H1 (cell line): ENCODE measurements at regions of chr19 and their contacts with region 1.

Region 1: DNA sequence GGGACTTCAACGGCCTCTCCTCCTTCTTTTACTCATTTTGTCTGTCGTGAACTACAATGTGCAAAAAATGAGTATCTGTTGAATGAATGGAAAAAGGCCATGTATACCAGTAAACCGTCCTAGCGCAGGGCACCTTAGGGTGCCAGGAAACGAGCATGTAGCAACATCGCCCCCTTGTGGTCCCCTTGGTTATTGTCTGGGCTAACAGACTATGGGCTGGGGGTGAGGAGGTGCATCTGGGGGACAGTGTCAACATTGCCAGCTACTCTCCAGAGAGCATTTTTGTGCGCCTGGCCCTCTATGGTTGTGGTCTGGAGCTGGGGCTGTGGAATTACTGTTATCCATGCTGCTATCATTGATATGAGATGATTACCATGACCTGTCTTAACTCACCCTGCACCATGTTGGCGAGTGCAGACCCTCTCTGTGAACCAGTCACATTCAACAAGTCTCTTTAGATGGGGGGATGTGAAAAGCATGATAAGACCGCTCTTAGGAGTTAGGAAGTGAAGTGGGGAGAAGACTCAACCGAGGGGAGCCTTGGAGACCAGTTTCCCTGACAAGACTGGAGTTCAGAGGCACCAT is 22.8 kb upstream of the SIGLEC11 start:
- DNase-seq: peak in 1 of 2 experiments; percentile 88
- H3K4me3 ChIP-seq: no peak overlapping the region
- H3K27ac ChIP-seq: no peak overlapping the region
- H3K4me1 ChIP-seq: no peaks in the 10 kb centered on the region
- H3K27me3 ChIP-seq: no peaks in the 10 kb centered on the region
- CTCF ChIP-seq: peak; percentile 91 to 95 (median 93)
- EP300 ChIP-seq: no peak
- POLR2A ChIP-seq: no peak
- RAD21 ChIP-seq: peak; percentile 93 to 98

Region 2: GRCh38 chr19:49911381-49912145 is 72.2 kb before region 1 on chr19:
- CTCF ChIA-PET with region 1: interaction called, 11 read pairs
- POLR2A ChIA-PET with region 1: no interaction called
- DNase-seq: no peak
- H3K4me3 ChIP-seq: no peak overlapping the region
- H3K27ac ChIP-seq: no peak overlapping the region
- H3K4me1 ChIP-seq: peaks cover 0 to 6% (median 3%) of the 10 kb centered on the region in 4 experiments; a peak in 3 of 7 replicates
- H3K27me3 ChIP-seq: no peaks in the 10 kb centered on the region; a peak in 1 of 7 replicates
- CTCF ChIP-seq: no peak
- EP300 ChIP-seq: no peak
- POLR2A ChIP-seq: peak in 1 of 2 experiments; percentile 68; a peak in 1 of 3 replicates
- RAD21 ChIP-seq: no peak

Region 3: GRCh38 chr19:49916842-49917733 is 66.6 kb before region 1 on chr19:
- CTCF ChIA-PET with region 1: interaction called, 16 read pairs
- POLR2A ChIA-PET with region 1: interaction called, 4 read pairs
- DNase-seq: no peak
- H3K4me3 ChIP-seq: no peak overlapping the region
- H3K27ac ChIP-seq: peak overlapping the region; percentile 54; the same call in 1 of the 2 replicates
- H3K4me1 ChIP-seq: peaks cover 0 to 7% (median 1%) of the 10 kb centered on the region in 4 experiments; a peak in 3 of 7 replicates
- H3K27me3 ChIP-seq: no peaks in the 10 kb centered on the region
- CTCF ChIP-seq: peak; percentile 50 to 72 (median 60)
- EP300 ChIP-seq: no peak
- POLR2A ChIP-seq: no peak
- RAD21 ChIP-seq: peak; percentile 23 to 47; a peak in 2 of 4 replicates

Region 4: GRCh38 chr19:49937750-49938381 is 45.9 kb before region 1 on chr19:
- CTCF ChIA-PET with region 1: interaction called, 231 read pairs
- POLR2A ChIA-PET with region 1: interaction called, 36 read pairs
- DNase-seq: peak; percentile 57 to 98
- H3K4me3 ChIP-seq: peak overlapping the region in 2 of 4 experiments; percentile 10 to 48; a peak in 3 of 8 replicates
- H3K27ac ChIP-seq: no peak overlapping the region
- H3K4me1 ChIP-seq: no peaks in the 10 kb centered on the region; a peak in 1 of 7 replicates
- H3K27me3 ChIP-seq: no peaks in the 10 kb centered on the region
- CTCF ChIP-seq: peak; percentile 88 to 97 (median 93)
- EP300 ChIP-seq: no peak
- POLR2A ChIP-seq: no peak
- RAD21 ChIP-seq: peak; percentile 99

Region 5: DNA sequence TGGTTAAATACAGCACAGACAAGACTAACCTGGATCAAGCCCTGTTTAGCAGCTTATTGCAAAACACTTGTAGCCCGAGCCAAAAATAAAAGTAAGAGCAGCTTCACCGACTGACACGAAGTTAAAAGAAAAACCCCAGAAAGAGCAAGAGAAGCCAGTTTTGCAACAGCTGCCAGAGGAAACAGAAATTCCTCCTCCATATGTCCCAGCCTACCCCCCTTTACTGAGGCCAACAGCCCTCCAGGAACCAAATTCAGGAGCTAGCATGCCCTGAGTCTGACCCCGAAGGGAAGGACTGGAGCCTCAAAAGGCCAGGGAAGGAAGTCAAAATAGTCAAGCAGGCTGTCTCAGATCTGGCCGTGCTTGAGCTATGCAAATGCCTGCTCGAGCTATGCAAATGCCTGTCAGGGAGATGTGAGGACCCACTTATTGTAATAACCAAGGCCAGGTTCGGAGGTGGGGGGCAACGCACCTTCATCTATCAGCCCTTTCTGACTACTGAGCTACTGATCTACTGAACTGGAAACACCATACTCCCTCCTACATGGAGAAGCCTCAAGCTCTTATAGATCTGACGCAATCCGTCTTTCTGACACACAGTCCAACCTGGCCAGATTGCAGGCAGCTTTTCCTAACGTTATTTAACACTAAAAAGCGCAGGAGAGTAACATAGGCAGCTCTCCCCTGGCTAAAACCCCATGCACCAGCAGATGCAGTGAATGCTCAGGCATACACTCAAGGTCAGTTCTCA is 29.5 kb before region 1 on chr19:
- CTCF ChIA-PET with region 1: interaction called, 28 read pairs
- POLR2A ChIA-PET with region 1: no interaction called
- DNase-seq: no peak
- H3K4me3 ChIP-seq: no peak overlapping the region
- H3K27ac ChIP-seq: no peak overlapping the region
- H3K4me1 ChIP-seq: peaks cover 0 to 17% (median 9%) of the 10 kb centered on the region in 4 experiments; a peak in 6 of 7 replicates
- H3K27me3 ChIP-seq: no peaks in the 10 kb centered on the region
- CTCF ChIP-seq: no peak
- EP300 ChIP-seq: no peak
- POLR2A ChIP-seq: no peak
- RAD21 ChIP-seq: no peak

Region 6: GRCh38 chr19:50003810-50004419 is 20.2 kb after region 1 on chr19:
- CTCF ChIA-PET with region 1: interaction called, 16 read pairs
- POLR2A ChIA-PET with region 1: interaction called, 3 read pairs
- DNase-seq: no peak
- H3K4me3 ChIP-seq: no peak overlapping the region
- H3K27ac ChIP-seq: no peak overlapping the region
- H3K4me1 ChIP-seq: no peaks in the 10 kb centered on the region
- H3K27me3 ChIP-seq: no peaks in the 10 kb centered on the region
- CTCF ChIP-seq: no peak
- EP300 ChIP-seq: no peak
- POLR2A ChIP-seq: no peak
- RAD21 ChIP-seq: no peak